Heart right ventricle (tissue), 16 donors: ENCODE measurements at regions of chr1 and their contacts with region 1.

Region 1: GRCh38 chr1:155591770-155592169 is 18.2 kb upstream of the MSTO1 start:
- DNase-seq: peak in 1 of 2 donors; percentile 50
- ATAC-seq: peak in 7 of 8 donors; percentile 59 to 81 (median 67)
- H3K4me3 ChIP-seq: no peak overlapping the region
- H3K27ac ChIP-seq: no peak overlapping the region
- H3K4me1 ChIP-seq: peaks cover 0 to 6% (median 0%) of the 10 kb centered on the region in 9 donors
- H3K27me3 ChIP-seq: no peaks in the 10 kb centered on the region
- CTCF ChIP-seq: peak in 8 of 9 donors; percentile 20 to 72 (median 65)

Region 2: GRCh38 chr1:155244368-155245162 is 347.2 kb before region 1 on chr1:
- intact Hi-C with region 1: loop called in 1 of 10 experiments (anchors 5 kb)
- DNase-seq: peak; percentile 95 to 99
- ATAC-seq: peak; percentile 91 to 97 (median 96)
- H3K4me3 ChIP-seq: peak overlapping the region; percentile 27 to 84 (median 69)
- H3K27ac ChIP-seq: peak overlapping the region; percentile 71 to 96 (median 92)
- H3K4me1 ChIP-seq: peaks cover 3 to 47% (median 28%) of the 10 kb centered on the region in 9 donors
- H3K27me3 ChIP-seq: no peaks in the 10 kb centered on the region
- CTCF ChIP-seq: peak in 5 of 9 donors; percentile 24 to 46 (median 39)

Region 3: DNA sequence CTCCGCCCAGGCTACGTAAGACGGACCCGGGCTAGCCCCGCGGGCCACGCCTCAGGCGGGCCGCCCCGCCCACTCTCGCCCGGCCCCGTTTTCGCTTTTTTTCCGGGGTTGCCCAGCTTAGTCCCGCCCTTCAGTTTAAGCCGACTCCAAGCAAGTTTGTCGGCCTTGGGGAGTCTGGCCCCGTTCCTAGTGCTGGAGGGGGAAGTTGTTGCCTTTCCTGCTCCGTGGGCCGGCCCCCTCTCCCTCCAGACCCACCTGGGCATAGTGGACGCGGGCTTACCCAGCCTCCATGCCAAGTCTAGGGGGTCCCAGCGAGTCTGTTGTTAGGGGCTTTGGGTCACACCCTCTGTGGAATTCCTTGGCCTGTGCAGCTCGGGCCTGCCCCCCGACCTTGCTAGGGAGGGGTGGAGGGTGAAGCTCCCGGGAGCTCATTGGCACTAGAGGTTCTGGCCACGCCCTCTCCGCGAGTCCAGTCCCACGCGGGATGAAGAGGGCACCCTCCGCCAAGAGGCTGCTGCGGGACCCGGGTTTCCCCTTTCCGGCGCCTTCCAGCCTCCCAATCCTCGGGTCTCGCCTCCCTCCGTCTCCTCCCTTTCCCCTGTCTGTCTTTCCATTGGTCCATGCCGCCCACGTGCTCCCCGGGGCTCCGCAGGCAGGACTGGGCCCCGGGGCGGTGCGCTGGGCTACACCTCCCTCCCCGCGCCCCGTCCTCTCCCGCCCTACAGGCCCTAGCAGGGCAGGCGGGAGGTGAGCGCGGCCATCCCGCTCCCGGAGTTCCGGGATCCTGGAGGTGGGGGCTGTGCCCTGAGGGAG is 267.8 kb before region 1 on chr1:
- intact Hi-C with region 1: loop called in 1 of 10 experiments (anchors 5 kb)
- DNase-seq: peak; percentile 94 to 96
- ATAC-seq: peak; percentile 85 to 92 (median 90)
- H3K4me3 ChIP-seq: peak overlapping the region; percentile 67 to 95 (median 84)
- H3K27ac ChIP-seq: peak overlapping the region; percentile 91 to 98 (median 97)
- H3K4me1 ChIP-seq: peaks cover 7 to 54% (median 40%) of the 10 kb centered on the region in 9 donors
- H3K27me3 ChIP-seq: no peaks in the 10 kb centered on the region
- CTCF ChIP-seq: no peak

Region 4: GRCh38 chr1:155339515-155340097 is 252.2 kb before region 1 on chr1:
- intact Hi-C with region 1: loop called in 3 of 10 experiments (anchors 10 kb)
- DNase-seq: no peak
- ATAC-seq: no peak
- H3K4me3 ChIP-seq: no peak overlapping the region
- H3K27ac ChIP-seq: no peak overlapping the region
- H3K4me1 ChIP-seq: no peaks in the 10 kb centered on the region
- H3K27me3 ChIP-seq: no peaks in the 10 kb centered on the region
- CTCF ChIP-seq: no peak

Region 5: GRCh38 chr1:155920717-155921116 is 328.9 kb after region 1 on chr1:
- intact Hi-C with region 1: no loop called
- DNase-seq: no peak
- ATAC-seq: no peak
- H3K4me3 ChIP-seq: no peak overlapping the region
- H3K27ac ChIP-seq: no peak overlapping the region
- H3K4me1 ChIP-seq: no peaks in the 10 kb centered on the region
- H3K27me3 ChIP-seq: no peaks in the 10 kb centered on the region
- CTCF ChIP-seq: no peak